HEK293T (cell line): ENCODE measurements at regions of chr17 and their contacts with region 1.

Region 1: GRCh38 chr17:58352014-58352842 is at the start of gene SUPT4H1:
- DNase-seq: peak; percentile 97

Region 2: DNA sequence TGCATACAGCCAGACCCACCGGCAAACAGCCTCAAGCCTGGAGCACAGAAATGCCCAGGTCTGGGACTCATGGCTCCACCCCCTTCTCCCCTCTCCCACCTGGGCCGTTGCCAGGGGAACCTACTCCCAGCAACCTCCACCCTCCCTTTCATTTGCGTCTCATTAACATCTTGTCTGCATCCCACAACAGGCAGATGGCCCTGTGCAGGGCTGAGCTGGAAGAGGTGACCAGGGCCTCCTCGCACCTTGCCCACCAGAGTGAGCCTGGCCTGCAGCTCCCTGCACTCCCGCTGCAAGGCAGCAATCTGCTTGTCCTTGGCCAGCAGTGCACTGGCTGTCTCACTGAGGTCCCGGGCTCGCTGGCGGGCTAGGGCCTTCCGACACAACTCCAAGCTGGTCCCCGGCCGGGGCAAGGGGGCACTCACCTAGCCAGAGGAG is 26.9 kb before region 1 on chr17:
- CTCF ChIA-PET with region 1: no interaction called
- POLR2A ChIA-PET with region 1: interaction called, 26 read pairs
- DNase-seq: no peak

Region 3: DNA sequence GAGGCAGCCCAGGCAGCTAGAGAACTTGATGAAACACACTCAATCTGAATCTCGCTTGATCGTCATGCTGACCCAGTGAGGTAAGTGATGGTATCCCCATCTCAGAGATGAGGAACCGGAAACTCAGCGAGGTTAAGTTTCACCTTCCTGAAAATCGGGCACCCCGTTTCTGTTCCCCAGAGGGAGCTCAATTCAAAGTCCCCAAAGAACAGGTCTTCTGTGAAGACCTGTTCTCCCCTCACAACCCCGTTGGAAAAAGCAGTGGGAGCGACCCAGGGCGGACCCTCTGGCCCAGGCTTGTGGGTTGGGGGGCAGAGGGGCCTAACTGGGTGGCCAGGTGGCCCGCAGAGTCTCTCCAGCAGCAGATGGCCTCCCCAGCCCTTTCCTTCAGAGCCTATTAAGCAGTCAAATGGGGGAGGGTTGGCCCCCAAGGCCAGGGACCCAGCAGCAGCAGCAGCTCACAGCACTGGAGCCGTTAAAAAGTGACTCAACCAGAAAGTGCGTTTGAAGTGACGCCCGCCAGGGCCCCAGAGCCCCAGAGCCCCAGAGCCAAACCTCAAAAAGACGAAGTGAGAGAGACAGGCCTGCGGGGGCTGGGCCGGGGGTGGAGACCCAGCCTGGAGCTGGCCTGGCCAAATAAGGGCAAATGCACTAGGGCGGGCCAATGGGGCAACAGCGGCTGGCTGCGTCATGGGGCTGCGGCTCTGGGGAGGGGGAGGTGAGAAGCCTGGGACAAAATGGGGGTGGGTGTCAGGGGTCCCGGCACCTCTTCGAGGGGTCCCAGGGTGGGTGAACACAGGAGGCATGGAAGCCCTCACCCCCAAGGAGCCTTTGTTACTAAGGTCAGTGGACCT is 14.4 kb before region 1 on chr17:
- CTCF ChIA-PET with region 1: no interaction called
- POLR2A ChIA-PET with region 1: interaction called, 25 read pairs
- DNase-seq: no peak

Region 4: DNA sequence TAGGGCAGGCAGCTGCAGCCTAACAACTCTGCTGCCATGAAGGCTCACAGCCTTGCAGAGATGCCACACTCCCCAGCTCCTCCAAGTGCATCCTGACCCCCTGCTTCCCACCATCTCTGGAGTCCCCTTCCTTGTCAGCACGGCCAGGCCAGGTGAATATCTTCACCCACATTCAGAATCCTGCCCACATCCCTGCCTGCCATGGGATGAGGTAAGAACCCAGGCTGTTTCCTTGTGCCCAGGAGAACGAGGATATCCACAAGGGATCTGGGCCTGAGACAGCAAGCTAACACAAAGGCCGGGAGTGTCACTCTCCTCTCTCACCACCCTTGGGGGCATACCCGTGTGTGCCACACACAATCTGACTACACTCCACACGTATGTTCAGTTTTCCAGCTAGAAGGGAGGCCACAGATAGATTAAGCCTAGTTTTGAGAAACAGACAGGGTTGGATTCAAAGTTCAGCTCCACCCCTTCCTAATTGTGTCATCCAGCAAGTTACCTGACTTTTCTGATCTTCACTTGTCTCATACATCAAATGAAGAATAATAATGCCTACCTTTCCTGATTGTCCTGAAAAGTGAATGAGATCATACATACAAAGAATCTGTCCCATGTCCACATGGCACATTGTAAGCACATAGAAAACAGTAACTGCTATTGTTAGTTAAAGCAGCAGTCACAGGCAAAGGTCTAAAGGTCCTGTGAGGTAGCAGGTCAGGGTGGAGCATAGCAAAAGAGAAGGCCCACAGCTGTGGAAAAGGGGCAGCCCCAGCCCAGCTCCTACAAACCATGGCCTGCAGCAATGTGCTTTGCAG is 17.2 kb after region 1 on chr17:
- CTCF ChIA-PET with region 1: interaction called, 4 read pairs
- POLR2A ChIA-PET with region 1: interaction called, 56 read pairs
- DNase-seq: no peak

Region 5: GRCh38 chr17:58391302-58391984 is 39.2 kb after region 1 on chr17:
- CTCF ChIA-PET with region 1: interaction called, 3 read pairs
- POLR2A ChIA-PET with region 1: interaction called, 29 read pairs
- DNase-seq: peak; percentile 70

Region 6: DNA sequence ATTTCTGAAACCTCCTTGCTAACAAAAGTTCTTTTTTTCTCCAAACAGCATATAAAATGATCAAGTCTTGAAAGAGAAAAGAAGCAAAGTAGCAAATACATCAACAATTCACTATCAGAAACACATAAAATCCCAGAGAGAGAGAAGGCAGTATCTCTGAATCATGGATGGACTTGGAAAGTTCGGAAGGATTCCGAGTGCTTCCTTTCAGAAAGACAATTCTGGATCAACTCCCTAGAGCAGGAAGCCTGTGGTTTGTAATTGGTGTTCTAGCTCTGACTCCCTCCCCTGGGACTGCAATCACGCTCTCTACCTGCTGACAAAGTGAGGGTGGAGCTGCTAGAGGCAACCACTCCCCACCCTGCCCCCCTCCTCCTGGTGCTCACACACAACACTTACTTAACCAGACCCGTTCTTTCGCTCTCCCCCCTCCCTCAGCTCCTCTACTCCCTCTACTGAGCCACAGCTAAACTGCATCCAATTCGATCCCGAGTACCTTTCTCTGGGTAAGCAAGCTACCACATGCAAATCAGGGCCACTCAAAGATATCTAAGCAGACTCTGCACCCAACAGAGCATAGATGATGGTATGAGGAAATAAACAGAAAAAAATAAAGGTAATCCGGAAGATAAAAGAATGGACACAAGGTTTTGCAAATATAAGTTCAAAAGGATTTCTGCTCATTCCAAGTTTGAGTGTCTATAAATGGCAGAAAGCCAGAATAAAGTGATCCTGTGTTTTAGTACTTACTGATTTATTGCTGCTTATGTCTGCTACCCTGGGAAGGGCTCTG is 65.3 kb after region 1 on chr17 and contains the start of gene RNF43:
- CTCF ChIA-PET with region 1: interaction called, 15 read pairs
- POLR2A ChIA-PET with region 1: interaction called, 234 read pairs
- DNase-seq: peak; percentile 92